Activated CD4-positive, alpha-beta memory T cell treated with anti-CD3 and anti-CD28 coated beads for 36 hours (primary cell): ENCODE measurements at regions of chr11 and their contacts with region 1.

Region 1: DNA sequence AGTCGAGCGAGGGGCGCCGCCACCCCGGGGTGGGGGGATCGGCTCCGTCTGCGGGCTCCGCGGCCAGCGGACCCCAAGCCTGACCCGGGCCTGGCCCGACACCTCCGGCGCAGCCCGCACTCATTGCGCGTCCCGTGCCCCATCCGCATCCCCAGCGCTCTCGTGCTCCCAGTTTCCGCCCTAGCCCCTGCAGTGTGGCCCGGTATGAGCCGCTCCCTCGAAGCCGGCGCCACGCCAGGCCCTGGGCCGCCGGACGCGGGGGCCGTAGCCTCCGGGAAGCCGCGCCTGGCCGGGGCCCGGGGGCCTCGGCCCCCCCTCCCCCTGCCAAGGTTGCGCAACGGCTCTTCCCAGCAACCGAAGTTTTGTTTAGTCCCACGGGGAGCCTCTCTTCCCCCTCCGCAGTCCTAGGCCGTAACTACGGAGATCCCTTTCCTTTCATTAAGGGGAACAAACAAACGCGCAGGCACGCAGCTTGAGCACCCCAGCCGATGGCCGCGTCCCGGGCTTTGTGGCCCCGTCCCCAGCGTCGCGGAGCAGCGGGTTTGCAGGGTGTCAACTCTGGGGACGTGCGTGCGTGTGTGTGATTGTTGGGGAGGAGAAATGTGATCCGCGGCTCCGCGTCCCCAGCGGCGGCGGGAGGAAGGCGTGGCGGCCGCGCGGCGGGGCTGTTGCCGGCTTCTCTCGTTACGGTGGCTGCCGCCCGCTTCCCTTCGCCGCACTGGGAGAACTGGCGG is 883 bp downstream of the HIPK3 start:
- DNase-seq: peak; percentile 84
- H3K4me3 Mint-ChIP-seq: peak overlapping the region; percentile 94
- H3K27ac Mint-ChIP-seq: peak overlapping the region; percentile 95
- H3K4me1 Mint-ChIP-seq: peaks cover 42% of the 10 kb centered on the region
- H3K27me3 Mint-ChIP-seq: no peaks in the 10 kb centered on the region

Region 2: GRCh38 chr11:32960553-32961164 is 297.4 kb before region 1 on chr11:
- CTCF ChIA-PET with region 1: no interaction called
- POLR2A ChIA-PET with region 1: no interaction called
- intact Hi-C with region 1: loop called (anchors 2 kb)
- DNase-seq: no peak
- H3K4me3 Mint-ChIP-seq: no peak overlapping the region
- H3K27ac Mint-ChIP-seq: no peak overlapping the region
- H3K4me1 Mint-ChIP-seq: peaks cover 9% of the 10 kb centered on the region
- H3K27me3 Mint-ChIP-seq: no peaks in the 10 kb centered on the region

Region 3: DNA sequence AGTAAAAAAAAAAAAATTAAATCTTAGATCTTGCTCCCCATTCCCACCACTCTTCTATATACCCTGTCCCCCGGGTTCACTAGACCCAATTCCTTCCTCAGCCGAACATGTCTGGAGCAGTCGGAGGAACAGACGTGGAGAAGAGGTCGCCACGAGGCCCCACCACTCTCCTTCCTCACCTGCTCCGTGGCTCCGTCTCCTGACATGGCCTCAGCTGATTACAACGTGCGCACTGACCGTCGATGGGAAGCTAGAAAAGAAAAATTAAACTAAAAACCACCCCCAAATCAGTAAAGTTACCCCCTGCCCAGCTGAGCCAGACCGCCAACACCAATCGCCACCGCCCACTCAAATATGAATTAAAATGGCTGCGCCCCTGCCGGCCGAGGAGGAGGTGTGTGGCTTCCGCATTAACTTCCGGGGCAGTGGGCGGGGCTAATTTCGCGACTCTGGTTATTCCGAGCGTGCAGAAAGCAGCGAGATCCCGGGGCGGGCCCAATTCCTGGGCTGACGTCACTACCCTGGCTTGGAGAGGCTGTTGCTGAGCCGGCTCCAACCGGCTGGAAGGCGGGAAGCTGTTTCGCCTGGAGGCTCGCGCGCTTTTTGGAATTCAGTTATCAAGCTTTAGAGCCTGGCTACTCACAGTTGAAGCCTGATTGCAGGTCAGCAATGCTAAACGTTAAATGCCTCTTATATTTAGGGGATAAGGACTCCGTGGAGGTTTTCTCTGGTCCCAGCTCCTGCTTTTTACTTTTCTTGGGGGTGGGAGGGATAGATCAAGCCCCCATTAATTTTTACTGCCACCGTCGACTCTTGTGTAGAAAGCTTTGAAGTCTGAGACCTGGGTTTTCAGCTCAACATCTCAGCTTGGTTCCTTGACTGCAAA is 96.7 kb before region 1 on chr11 and contains the start of gene CSTF3:
- CTCF ChIA-PET with region 1: interaction called, 3 read pairs
- POLR2A ChIA-PET with region 1: no interaction called
- intact Hi-C with region 1: loop called (anchors 1 kb)
- DNase-seq: peak; percentile 99
- H3K4me3 Mint-ChIP-seq: peak within 1 kb of the TSS; percentile 99
- H3K27ac Mint-ChIP-seq: peak within 1 kb of the TSS; percentile 95
- H3K4me1 Mint-ChIP-seq: peaks cover 40% of the 10 kb centered on the region
- H3K27me3 Mint-ChIP-seq: no peaks in the 10 kb centered on the region
- total RNA-seq, gene CSTF3: 31.7 to 33.7 TPM

Region 4: DNA sequence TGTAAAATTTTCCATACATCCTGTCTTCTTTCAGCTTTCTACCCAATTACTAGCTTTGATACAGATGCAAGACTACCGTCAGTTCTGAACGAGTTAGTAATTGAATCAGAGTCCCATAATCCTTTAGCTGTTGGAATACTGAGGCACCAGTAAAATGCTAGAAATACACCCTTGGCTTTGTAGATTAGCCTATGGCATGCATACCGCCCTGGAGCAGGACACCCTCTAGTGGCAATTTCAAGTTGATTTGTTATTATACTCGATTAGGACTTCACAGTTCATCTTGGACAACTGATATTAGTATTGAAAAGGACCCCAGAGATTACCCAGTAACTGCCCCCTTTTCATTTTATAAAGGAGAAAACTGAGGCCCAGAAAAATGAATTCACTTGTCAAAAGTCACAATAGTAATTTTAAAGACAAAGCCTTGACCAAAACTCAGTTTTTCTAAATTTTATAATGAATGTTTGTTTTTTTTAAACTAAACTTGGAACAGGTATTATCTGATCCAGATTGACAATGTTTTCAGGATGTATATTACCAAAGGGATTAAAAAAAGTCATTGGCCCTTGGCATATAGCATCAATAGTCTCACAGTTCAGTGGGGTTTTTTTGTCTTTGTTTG is 71.8 kb after region 1 on chr11:
- CTCF ChIA-PET with region 1: interaction called, 3 read pairs
- POLR2A ChIA-PET with region 1: no interaction called
- intact Hi-C with region 1: loop called (anchors 1 kb)
- DNase-seq: peak; percentile 55
- H3K4me3 Mint-ChIP-seq: no peak overlapping the region
- H3K27ac Mint-ChIP-seq: no peak overlapping the region
- H3K4me1 Mint-ChIP-seq: peaks cover 14% of the 10 kb centered on the region
- H3K27me3 Mint-ChIP-seq: no peaks in the 10 kb centered on the region

Region 5: DNA sequence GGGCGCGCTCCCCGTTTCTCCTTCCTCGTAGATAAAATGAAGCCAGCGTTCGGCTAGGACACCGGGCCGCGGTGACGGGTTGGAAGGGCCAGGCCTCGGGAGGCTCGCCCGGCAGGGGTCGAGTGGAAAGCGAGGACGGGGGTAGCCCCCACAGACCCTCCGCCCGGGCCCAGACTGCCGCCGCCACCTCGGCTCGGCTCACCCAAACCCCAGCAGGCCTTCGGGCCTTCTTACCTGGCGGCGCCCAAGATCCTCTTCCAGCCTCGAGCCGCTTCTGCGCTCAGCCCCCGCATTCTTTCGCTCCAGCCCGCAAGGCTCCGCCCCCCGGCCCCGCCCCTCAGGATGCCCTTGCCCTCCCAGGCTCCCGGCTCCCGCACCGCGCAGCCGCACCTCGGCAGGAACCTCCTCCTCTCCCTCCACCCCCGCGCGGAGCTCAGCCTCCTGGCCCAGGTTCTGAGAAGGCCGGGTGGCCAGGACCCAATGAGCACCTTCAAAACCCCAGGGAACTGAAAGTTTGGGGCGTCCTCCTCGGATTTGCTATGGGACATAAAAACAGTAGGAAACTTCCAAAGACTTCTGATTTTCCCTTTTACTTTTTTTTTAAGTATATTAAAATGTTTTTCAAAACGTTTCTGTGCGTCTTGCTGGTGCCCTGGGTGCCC is 478.2 kb after region 1 on chr11 and contains the start of gene CD59:
- CTCF ChIA-PET with region 1: no interaction called
- POLR2A ChIA-PET with region 1: no interaction called
- intact Hi-C with region 1: loop called (anchors 10 kb)
- DNase-seq: peak; percentile 94
- H3K4me3 Mint-ChIP-seq: peak within 1 kb of the TSS; percentile 82
- H3K27ac Mint-ChIP-seq: peak within 1 kb of the TSS; percentile 70
- H3K4me1 Mint-ChIP-seq: peaks cover 48% of the 10 kb centered on the region
- H3K27me3 Mint-ChIP-seq: no peaks in the 10 kb centered on the region
- total RNA-seq, gene CD59: 79.4 TPM